RWPE1 (cell line): ENCODE measurements at regions of chr12 and their contacts with region 1.

Region 1: GRCh38 chr12:98397316-98398105 is 117.9 kb upstream of the TMPO start:
- DNase-seq: peak; percentile 78
- H3K27ac ChIP-seq: no peak overlapping the region
- CTCF ChIP-seq: peak; percentile 82

Region 2: GRCh38 chr12:98379106-98379505 is 18.4 kb before region 1 on chr12:
- CTCF ChIA-PET with region 1: no interaction called
- POLR2A ChIA-PET with region 1: no interaction called
- DNase-seq: no peak
- H3K27ac ChIP-seq: no peak overlapping the region
- CTCF ChIP-seq: no peak

Region 3: DNA sequence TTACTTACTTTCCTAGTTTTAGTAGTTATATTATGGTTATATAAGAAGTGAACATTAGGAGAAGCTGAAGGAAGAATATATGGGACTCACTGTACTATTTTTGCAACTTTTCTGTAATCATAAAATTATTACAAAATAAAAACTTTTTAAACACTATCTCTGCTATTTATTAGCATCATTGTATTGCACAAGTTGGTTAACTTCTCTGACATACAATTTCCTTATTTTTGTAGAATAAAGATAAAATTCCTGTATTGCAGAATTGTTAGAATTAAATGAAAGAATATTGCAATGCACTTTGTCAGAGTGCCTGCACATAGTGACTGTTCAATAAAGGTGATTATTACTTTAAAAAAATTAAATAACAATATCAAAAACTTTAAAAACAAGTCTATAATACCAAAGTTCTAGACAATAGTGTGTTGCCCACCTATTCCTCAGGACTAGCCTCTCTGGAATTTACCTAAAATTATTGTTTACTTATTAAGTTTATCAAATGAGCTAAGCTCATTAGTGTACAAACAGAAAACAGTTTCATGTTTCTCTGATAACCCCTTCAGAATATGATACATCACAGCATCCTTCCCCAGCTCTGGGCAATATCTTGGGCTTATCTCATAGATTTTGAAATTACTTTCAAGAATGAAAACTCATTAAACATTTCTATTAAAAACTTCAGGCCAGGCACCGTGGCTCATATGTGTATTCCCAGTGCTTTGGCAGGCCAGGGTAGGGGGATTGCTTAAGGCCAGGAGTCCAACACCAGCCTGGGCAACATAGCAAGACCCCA is 40.5 kb after region 1 on chr12:
- CTCF ChIA-PET with region 1: interaction called, 11 read pairs
- POLR2A ChIA-PET with region 1: no interaction called
- DNase-seq: no peak
- H3K27ac ChIP-seq: no peak overlapping the region
- CTCF ChIP-seq: no peak